Endothelial cell of umbilical vein (primary cell): ENCODE measurements at regions of chr22 and their contacts with region 1.

Region 1: GRCh38 chr22:29635734-29636357 is 32.4 kb downstream of the NF2 start:
- DNase-seq: peak; percentile 64
- H3K4me3 ChIP-seq: no peak overlapping the region
- H3K27ac ChIP-seq: no peak overlapping the region
- H3K4me1 ChIP-seq: peaks cover 50% of the 10 kb centered on the region
- H3K27me3 ChIP-seq: no peaks in the 10 kb centered on the region
- CTCF ChIP-seq: peak; percentile 60 to 65
- POLR2A ChIP-seq: no peak

Region 2: GRCh38 chr22:29603358-29604075 is 32.3 kb before region 1 on chr22 and contains the start of gene NF2:
- CTCF ChIA-PET with region 1: interaction called, 16 read pairs
- POLR2A ChIA-PET with region 1: no interaction called
- dilution Hi-C with region 1: no loop called
- intact Hi-C with region 1: loop called (anchors 1 kb)
- DNase-seq: peak; percentile 100
- H3K4me3 ChIP-seq: peak within 1 kb of the TSS; percentile 98 to 99 (median 98)
- H3K27ac ChIP-seq: peak within 1 kb of the TSS; percentile 86
- H3K4me1 ChIP-seq: peaks cover 35% of the 10 kb centered on the region
- H3K27me3 ChIP-seq: no peaks in the 10 kb centered on the region
- CTCF ChIP-seq: no peak
- POLR2A ChIP-seq: peak; percentile 82
- total RNA-seq, gene NF2: 114 and 115 TPM in 2 replicates

Region 3: GRCh38 chr22:29654356-29654755 is 18.5 kb after region 1 on chr22:
- CTCF ChIA-PET with region 1: interaction called, 11 read pairs
- POLR2A ChIA-PET with region 1: no interaction called
- dilution Hi-C with region 1: no loop called
- intact Hi-C with region 1: no loop called
- DNase-seq: no peak
- H3K4me3 ChIP-seq: no peak overlapping the region
- H3K27ac ChIP-seq: no peak overlapping the region
- H3K4me1 ChIP-seq: no peaks in the 10 kb centered on the region
- H3K27me3 ChIP-seq: no peaks in the 10 kb centered on the region
- CTCF ChIP-seq: no peak
- POLR2A ChIP-seq: no peak

Region 4: DNA sequence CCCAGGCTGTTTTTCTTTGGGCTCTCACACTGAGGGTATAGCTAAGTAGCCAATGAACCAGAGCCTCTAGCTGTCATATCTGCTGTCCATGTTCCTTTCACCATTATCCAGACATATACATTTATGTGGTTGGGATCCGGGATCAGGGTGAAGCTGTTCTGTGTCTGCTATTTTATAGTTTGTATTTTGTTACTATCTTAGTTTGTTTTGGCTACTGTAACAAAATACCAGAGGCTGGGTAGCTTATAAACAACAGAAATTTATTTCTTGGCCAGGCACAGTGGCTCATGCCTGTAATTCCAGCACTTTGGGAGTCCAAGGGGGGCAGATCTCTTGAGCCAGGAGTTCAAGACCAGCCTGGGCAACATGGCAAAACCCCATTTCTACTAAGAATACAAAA is 43.5 kb after region 1 on chr22:
- CTCF ChIA-PET with region 1: interaction called, 12 read pairs
- POLR2A ChIA-PET with region 1: no interaction called
- dilution Hi-C with region 1: no loop called
- intact Hi-C with region 1: no loop called
- DNase-seq: no peak
- H3K4me3 ChIP-seq: no peak overlapping the region
- H3K27ac ChIP-seq: no peak overlapping the region
- H3K4me1 ChIP-seq: no peaks in the 10 kb centered on the region
- H3K27me3 ChIP-seq: no peaks in the 10 kb centered on the region
- CTCF ChIP-seq: no peak
- POLR2A ChIP-seq: no peak

Region 5: DNA sequence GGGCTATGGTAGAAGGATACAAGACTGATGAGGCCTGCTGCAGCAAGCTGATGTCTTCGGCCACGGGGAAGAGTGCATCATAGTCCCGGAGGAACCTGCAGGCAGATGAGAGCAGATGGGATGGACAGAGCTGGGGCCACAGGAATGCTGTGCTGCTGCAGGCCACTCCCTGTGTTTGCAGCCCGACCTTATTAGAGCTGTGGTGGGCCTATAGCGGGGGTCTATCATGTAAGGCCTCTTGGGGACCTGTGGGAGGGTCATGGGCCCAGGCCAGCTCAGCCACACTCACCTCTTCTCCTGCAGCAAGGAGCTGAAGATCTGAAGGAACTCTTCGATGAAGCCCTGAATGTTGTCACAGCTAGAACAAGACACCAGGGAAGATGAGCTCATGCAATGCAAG is 170.3 kb after region 1 on chr22:
- CTCF ChIA-PET with region 1: no interaction called
- POLR2A ChIA-PET with region 1: no interaction called
- dilution Hi-C with region 1: no loop called
- intact Hi-C with region 1: loop called (anchors 5 kb)
- DNase-seq: no peak
- H3K4me3 ChIP-seq: no peak overlapping the region
- H3K27ac ChIP-seq: no peak overlapping the region
- H3K4me1 ChIP-seq: no peaks in the 10 kb centered on the region
- H3K27me3 ChIP-seq: no peaks in the 10 kb centered on the region
- CTCF ChIP-seq: no peak
- POLR2A ChIP-seq: no peak